ENCODE measurements at regions of chr11 and their contacts with region 1.

Region 1: DNA sequence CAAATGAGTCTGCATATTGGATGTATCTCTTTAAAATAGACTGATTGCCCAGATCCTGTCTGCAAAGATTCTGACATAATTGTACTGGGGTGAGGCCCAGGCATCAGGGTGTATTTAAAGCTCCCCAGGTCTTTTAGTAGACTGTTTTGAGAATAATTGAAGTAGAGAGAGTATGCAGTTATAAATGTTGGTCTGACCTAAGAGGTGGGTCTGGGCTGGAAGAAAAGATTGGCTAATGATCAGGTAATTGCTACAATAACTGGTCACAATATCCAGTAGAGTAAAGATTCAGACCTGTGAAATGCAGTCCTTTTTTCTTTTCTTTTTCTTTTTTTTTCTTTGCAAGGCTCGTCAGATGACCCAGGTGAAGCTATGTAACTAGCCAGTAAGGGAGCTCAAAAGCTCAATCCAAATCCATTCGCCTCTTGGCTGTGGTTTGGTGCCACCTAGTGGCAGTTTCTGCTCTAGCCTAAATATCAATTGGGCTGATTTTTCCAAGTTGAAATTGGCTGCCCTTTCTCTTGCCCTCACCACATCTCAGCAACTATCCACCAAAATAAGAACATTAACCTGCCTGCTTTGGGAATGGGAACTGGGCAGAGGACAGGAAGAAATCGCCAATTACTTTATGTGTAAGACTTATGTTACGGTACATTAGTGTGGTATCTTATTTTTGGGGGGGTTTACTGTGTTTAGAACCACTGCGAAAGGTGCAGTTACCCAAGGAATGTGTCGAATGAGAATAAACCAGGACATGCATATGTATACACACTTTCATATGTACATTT is 45.9 kb downstream of the ZNF143 start:
- DNase-seq: peak; percentile 44 to 84 (median 77)
- ATAC-seq: peak; percentile 84
- H3K4me3 ChIP-seq: no peak overlapping the region
- H3K4me3 Mint-ChIP-seq: no peak overlapping the region
- H3K27ac ChIP-seq: no peak overlapping the region
- H3K27ac Mint-ChIP-seq: no peak overlapping the region
- H3K4me1 ChIP-seq: no peaks in the 10 kb centered on the region
- H3K4me1 Mint-ChIP-seq: peaks cover 11% of the 10 kb centered on the region
- H3K27me3 ChIP-seq: no peaks in the 10 kb centered on the region
- H3K27me3 Mint-ChIP-seq: no peaks in the 10 kb centered on the region
- CTCF ChIP-seq: peak; percentile 84

Region 2: DNA sequence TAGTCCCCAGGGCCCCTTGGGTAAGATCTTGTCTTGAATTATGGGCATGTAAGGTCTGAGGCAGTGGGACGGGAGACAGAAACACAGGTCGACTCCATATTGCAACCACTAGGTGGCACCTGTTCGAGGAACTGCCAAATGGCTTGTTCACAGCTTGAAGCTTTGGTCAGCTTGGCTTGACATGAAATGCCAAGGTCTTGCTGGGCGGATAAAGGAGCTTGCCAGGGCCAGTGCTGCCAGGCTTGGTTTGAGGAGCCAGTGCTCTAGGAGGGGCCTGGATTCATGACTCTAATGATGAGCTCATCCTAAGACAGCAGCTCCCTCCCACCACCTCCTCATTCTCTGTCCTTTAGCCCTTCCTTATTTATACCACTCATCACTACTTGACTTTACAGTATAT is 491.0 kb before region 1 on chr11:
- CTCF ChIA-PET with region 1: interaction called, 103 read pairs
- POLR2A ChIA-PET with region 1: interaction called, 3 read pairs
- intact Hi-C with region 1: loop called (anchors 1 kb)
- DNase-seq: peak; percentile 19 to 78 (median 55)
- ATAC-seq: peak; percentile 71
- H3K4me3 ChIP-seq: no peak overlapping the region
- H3K4me3 Mint-ChIP-seq: no peak overlapping the region
- H3K27ac ChIP-seq: no peak overlapping the region
- H3K27ac Mint-ChIP-seq: no peak overlapping the region
- H3K4me1 ChIP-seq: peaks cover 5% of the 10 kb centered on the region
- H3K4me1 Mint-ChIP-seq: peaks cover 12% of the 10 kb centered on the region
- H3K27me3 ChIP-seq: peaks cover 0 to 3% of the 10 kb centered on the region in 2 experiments
- H3K27me3 Mint-ChIP-seq: peaks cover 2% of the 10 kb centered on the region
- CTCF ChIP-seq: peak; percentile 73

Region 3: GRCh38 chr11:9158898-9159391 is 347.7 kb before region 1 on chr11:
- CTCF ChIA-PET with region 1: interaction called, 28 read pairs
- POLR2A ChIA-PET with region 1: no interaction called
- intact Hi-C with region 1: no loop called
- DNase-seq: no peak
- ATAC-seq: no peak
- H3K4me3 ChIP-seq: no peak overlapping the region
- H3K4me3 Mint-ChIP-seq: no peak overlapping the region
- H3K27ac ChIP-seq: no peak overlapping the region
- H3K27ac Mint-ChIP-seq: no peak overlapping the region
- H3K4me1 ChIP-seq: no peaks in the 10 kb centered on the region
- H3K4me1 Mint-ChIP-seq: no peaks in the 10 kb centered on the region
- H3K27me3 ChIP-seq: no peaks in the 10 kb centered on the region
- H3K27me3 Mint-ChIP-seq: no peaks in the 10 kb centered on the region
- CTCF ChIP-seq: no peak

Region 4: DNA sequence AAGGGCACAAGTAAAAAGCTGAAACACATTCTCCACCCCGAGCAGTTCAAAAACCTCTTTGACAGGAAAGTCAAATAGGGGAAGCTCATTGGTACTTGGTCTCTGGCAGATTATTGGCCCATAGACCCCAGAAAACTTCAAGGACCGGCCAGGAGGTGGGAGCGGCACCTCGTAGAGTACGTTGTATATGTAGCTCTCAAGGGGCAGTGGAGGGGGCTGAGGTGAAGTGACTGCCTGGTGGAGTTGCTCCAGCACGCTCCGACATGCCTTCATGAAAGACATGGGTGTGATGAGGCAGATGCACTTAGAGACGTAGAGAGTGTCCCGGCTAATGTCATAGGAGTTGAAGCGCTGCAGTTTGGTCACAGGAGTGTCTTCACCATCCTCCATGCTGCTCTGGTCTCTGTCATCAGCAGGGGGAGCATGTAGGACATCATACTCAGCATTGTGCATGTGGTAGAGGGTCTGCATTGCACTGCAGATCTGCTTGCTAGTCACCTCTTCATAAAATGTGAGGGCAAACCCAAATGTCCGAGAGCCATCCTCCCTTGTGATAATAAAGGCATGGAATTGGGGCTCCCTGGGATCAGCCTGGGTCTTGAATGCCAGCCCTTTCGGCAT is 302.9 kb before region 1 on chr11:
- CTCF ChIA-PET with region 1: interaction called, 3 read pairs
- POLR2A ChIA-PET with region 1: no interaction called
- intact Hi-C with region 1: loop called in 1 of 2 experiments (anchors 1 kb)
- DNase-seq: peak in 6 of 9 experiments; percentile 3 to 62 (median 34)
- ATAC-seq: peak; percentile 70
- H3K4me3 ChIP-seq: no peak overlapping the region
- H3K4me3 Mint-ChIP-seq: no peak overlapping the region
- H3K27ac ChIP-seq: no peak overlapping the region
- H3K27ac Mint-ChIP-seq: no peak overlapping the region
- H3K4me1 ChIP-seq: peaks cover 3% of the 10 kb centered on the region
- H3K4me1 Mint-ChIP-seq: peaks cover 28% of the 10 kb centered on the region
- H3K27me3 ChIP-seq: no peaks in the 10 kb centered on the region
- H3K27me3 Mint-ChIP-seq: no peaks in the 10 kb centered on the region
- CTCF ChIP-seq: no peak

Region 5: GRCh38 chr11:9448576-9449352 is 57.9 kb before region 1 on chr11:
- CTCF ChIA-PET with region 1: interaction called, 5 read pairs
- POLR2A ChIA-PET with region 1: no interaction called
- intact Hi-C with region 1: loop called in 1 of 2 experiments (anchors 10 kb)
- DNase-seq: no peak
- ATAC-seq: no peak
- H3K4me3 ChIP-seq: no peak overlapping the region
- H3K4me3 Mint-ChIP-seq: no peak overlapping the region
- H3K27ac ChIP-seq: no peak overlapping the region
- H3K27ac Mint-ChIP-seq: no peak overlapping the region
- H3K4me1 ChIP-seq: no peaks in the 10 kb centered on the region
- H3K4me1 Mint-ChIP-seq: no peaks in the 10 kb centered on the region
- H3K27me3 ChIP-seq: no peaks in the 10 kb centered on the region
- H3K27me3 Mint-ChIP-seq: no peaks in the 10 kb centered on the region
- CTCF ChIP-seq: no peak

Region 6: DNA sequence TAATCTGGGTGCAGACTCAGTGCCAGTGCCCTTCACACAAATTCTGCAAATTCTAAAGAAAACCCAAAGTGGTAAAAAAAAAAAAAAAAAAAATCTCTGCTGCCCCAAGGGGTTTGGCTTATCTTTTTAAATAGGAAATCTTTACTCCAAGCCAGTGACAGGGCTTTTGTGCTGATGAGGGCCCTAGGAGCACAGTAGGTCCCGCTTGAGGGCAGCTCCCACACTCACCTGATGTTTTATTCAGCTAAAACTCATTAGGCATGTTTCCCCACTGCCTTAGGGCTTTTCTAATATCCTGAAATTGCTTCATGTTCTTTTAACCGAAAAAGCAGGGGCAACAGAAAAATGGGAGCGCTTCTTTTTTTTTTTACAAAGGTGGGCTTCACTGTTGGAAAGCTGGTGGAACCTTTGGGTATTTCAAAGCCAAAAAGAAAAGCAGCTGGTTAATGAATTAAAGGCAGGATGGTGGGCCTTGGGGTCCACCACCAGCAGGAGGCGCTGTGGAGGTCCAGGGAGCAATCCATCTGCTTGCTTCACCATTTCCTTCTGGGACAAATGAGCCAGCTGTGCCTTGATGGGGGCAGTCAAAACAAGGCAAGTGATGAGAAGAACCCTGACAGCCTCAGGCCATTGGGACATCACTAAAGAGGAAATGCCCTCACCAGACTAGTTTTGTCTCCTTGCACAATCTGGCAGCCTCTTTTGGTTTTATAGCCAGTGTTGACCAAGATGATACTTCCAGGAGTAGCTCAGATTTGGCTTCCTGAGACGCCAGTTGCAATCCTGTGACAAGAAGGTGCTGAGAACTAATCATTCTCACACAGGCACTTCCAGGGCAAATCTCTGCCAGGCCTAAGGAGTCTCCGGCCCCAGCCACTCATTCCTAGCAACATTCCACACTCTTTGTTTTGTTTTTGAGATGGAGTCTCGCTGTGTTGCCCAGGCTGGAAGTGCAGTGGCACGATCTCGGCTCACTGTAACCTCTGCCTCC is 28.4 kb after region 1 on chr11:
- CTCF ChIA-PET with region 1: interaction called, 12 read pairs
- POLR2A ChIA-PET with region 1: no interaction called
- intact Hi-C with region 1: no loop called
- DNase-seq: peak; percentile 53 to 87 (median 79)
- ATAC-seq: peak; percentile 61
- H3K4me3 ChIP-seq: no peak overlapping the region
- H3K4me3 Mint-ChIP-seq: no peak overlapping the region
- H3K27ac ChIP-seq: no peak overlapping the region
- H3K27ac Mint-ChIP-seq: no peak overlapping the region
- H3K4me1 ChIP-seq: no peaks in the 10 kb centered on the region
- H3K4me1 Mint-ChIP-seq: no peaks in the 10 kb centered on the region
- H3K27me3 ChIP-seq: no peaks in the 10 kb centered on the region
- H3K27me3 Mint-ChIP-seq: no peaks in the 10 kb centered on the region
- CTCF ChIP-seq: peak; percentile 75